ENCODE measurements at regions of chr13 and their contacts with region 1.

Region 1: GRCh38 chr13:75219479-75220237 is 262.3 kb downstream of the TBC1D4 start:
- DNase-seq: peak; percentile 89
- H3K4me3 ChIP-seq: peak overlapping the region; percentile 33 to 54; a peak in 3 of 4 replicates
- H3K27ac ChIP-seq: peak overlapping the region in 1 of 2 experiments; percentile 81; a peak in 2 of 4 replicates
- H3K4me1 ChIP-seq: peaks cover 0 to 18% of the 10 kb centered on the region in 2 experiments; a peak in 2 of 4 replicates
- H3K27me3 ChIP-seq: no peaks in the 10 kb centered on the region
- CTCF ChIP-seq: peak; percentile 98
- EP300 ChIP-seq: no peak; a peak in 1 of 4 replicates
- RAD21 ChIP-seq: peak; percentile 94

Region 2: GRCh38 chr13:73722120-73722519 is 1497.5 kb before region 1 on chr13:
- CTCF ChIA-PET with region 1: interaction called, 10 read pairs
- POLR2A ChIA-PET with region 1: no interaction called
- DNase-seq: peak; percentile 29
- H3K4me3 ChIP-seq: no peak overlapping the region
- H3K27ac ChIP-seq: no peak overlapping the region
- H3K4me1 ChIP-seq: peaks cover 8 to 10% of the 10 kb centered on the region in 2 experiments; a peak in 3 of 4 replicates
- H3K27me3 ChIP-seq: no peaks in the 10 kb centered on the region
- CTCF ChIP-seq: peak; percentile 59
- EP300 ChIP-seq: 0 out of 4 replicates have a peak, but pooled peaks of 1 of the 2 experiments have one; percentile 16
- RAD21 ChIP-seq: peak; percentile 67

Region 3: DNA sequence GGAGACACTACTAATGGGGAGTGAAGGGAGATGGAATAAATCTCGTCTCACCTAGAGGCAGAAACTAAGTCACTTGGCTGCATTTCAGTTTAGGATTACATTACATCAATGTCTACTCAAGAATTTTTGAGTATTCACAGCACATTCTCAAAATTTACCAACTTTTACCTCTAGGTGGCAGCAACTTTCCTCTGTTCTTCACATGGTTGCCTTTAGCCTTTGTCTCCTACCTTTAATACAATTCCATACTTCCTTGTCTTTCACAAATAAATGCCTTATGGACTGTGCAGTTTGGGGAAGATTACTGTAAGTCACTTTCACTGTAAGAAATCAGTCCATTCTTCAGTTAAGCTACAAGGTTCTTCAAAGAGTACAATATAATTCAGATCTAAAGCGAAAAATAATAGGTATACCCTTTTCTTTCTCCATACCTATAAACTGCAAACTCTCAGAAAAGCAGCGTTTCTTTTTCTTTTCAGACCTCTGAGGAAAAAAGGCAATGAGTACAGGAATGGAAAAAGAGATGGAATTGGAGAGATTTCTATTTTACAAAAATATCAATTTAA is 1464.8 kb before region 1 on chr13:
- CTCF ChIA-PET with region 1: interaction called, 21 read pairs
- POLR2A ChIA-PET with region 1: interaction called, 4 read pairs
- DNase-seq: peak; percentile 30
- H3K4me3 ChIP-seq: no peak overlapping the region; a peak in 1 of 4 replicates
- H3K27ac ChIP-seq: peak overlapping the region in 1 of 2 experiments; percentile 14; a peak in 1 of 4 replicates
- H3K4me1 ChIP-seq: peaks cover 4 to 20% of the 10 kb centered on the region in 2 experiments; a peak in 3 of 4 replicates
- H3K27me3 ChIP-seq: no peaks in the 10 kb centered on the region
- CTCF ChIP-seq: peak; percentile 75
- EP300 ChIP-seq: no peak
- RAD21 ChIP-seq: peak; percentile 91

Region 4: GRCh38 chr13:73835138-73835721 is 1384.4 kb before region 1 on chr13:
- CTCF ChIA-PET with region 1: interaction called, 11 read pairs
- POLR2A ChIA-PET with region 1: no interaction called
- DNase-seq: peak; percentile 33
- H3K4me3 ChIP-seq: no peak overlapping the region
- H3K27ac ChIP-seq: peak overlapping the region in 1 of 2 experiments; percentile 69; a peak in 2 of 4 replicates
- H3K4me1 ChIP-seq: peaks cover 8 to 9% of the 10 kb centered on the region in 2 experiments; a peak in 3 of 4 replicates
- H3K27me3 ChIP-seq: no peaks in the 10 kb centered on the region
- CTCF ChIP-seq: peak; percentile 76
- EP300 ChIP-seq: no peak
- RAD21 ChIP-seq: peak; percentile 85

Region 5: DNA sequence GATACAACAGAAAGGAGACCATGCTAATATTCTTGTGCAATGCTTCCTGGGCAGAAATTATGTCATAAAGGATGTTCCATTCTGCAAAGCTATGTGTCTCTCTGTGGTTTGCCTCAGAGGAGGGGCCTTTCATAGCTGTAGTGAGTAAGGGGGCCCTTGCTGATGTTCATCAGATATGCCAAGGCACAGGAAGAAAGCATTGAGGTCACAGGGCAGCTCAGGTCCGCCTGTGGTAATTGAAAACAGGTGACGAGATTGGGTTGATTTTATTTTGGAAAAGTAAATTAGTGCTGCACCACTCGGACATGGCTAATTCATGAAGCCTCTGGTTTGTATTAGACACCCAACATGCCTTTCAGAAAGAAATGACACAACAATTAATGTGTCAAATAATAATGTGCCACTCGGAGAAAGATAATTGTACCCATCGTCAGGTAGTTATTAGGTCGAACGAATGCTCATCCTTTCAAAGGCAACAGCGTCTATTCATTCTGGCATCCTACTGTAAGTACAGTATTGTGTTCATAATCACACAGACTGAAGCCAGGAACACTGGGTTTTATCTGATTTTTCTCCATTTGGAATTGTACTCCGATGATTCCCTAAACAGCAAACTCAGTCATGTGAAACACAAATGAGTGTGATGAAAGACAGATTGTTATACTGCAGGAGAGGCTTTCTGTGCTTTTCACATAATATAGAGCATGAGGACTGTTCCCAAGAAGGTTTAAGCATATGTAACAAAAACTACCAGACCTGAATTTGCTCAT is 663.8 kb before region 1 on chr13:
- CTCF ChIA-PET with region 1: interaction called, 10 read pairs
- POLR2A ChIA-PET with region 1: no interaction called
- DNase-seq: peak; percentile 74
- H3K4me3 ChIP-seq: no peak overlapping the region; a peak in 2 of 4 replicates
- H3K27ac ChIP-seq: peak overlapping the region; percentile 16 to 100; a peak in 3 of 4 replicates
- H3K4me1 ChIP-seq: peaks cover 0 to 30% of the 10 kb centered on the region in 2 experiments; a peak in 2 of 4 replicates
- H3K27me3 ChIP-seq: no peaks in the 10 kb centered on the region
- CTCF ChIP-seq: no peak
- EP300 ChIP-seq: peak; percentile 8 to 82; a peak in 2 of 4 replicates
- RAD21 ChIP-seq: peak; percentile 54

Region 6: DNA sequence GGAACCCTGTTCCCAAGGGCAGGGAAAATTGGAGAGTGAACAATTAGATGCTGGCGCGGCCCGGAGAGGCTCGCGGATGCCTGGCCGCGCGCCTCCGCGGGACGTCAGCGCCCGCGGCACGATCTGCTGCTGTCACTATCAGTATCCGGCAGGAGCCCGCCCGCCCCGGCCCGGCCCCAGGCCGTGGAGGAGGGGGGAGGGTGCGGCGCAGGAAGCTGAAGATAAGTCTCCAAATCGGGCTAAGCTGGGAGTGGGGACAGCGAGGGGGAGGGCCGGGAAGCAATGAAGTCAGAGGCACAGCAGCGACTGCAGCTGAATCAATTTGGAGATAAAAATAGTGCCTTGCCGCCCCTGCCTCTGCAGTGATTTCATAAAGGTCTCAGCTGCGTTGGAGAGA is 643.9 kb before region 1 on chr13:
- CTCF ChIA-PET with region 1: interaction called, 13 read pairs
- POLR2A ChIA-PET with region 1: no interaction called
- DNase-seq: peak; percentile 90
- H3K4me3 ChIP-seq: peak overlapping the region; percentile 36 to 64
- H3K27ac ChIP-seq: peak overlapping the region in 1 of 2 experiments; percentile 99; a peak in 2 of 4 replicates
- H3K4me1 ChIP-seq: peaks cover 0 to 15% of the 10 kb centered on the region in 2 experiments; a peak in 2 of 4 replicates
- H3K27me3 ChIP-seq: no peaks in the 10 kb centered on the region; the same call in 1 of the 2 replicates
- CTCF ChIP-seq: no peak
- EP300 ChIP-seq: peak in 1 of 2 experiments; percentile 90; a peak in 2 of 4 replicates
- RAD21 ChIP-seq: peak; percentile 32

Region 7: DNA sequence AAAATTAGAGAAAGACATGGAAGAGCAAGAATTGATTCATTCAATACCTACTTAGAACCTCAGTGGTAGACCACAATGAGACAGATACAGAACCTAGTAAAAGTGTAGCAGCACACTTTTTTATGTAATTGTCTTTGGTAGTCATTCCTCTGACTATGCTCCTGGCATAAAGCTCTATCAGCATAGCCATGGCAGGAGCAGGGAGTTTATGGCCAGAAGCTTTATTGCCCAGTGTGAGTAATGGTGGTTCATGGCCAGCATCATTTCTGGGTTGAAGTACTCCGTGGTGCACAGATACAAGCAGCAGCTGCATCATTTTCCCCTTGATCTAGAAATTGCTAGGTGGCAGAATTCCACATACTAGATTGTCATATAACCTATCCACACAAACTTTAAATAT is 90.3 kb before region 1 on chr13:
- CTCF ChIA-PET with region 1: no interaction called
- POLR2A ChIA-PET with region 1: no interaction called
- DNase-seq: no peak
- H3K4me3 ChIP-seq: no peak overlapping the region
- H3K27ac ChIP-seq: no peak overlapping the region
- H3K4me1 ChIP-seq: no peaks in the 10 kb centered on the region
- H3K27me3 ChIP-seq: no peaks in the 10 kb centered on the region
- CTCF ChIP-seq: no peak
- EP300 ChIP-seq: no peak
- RAD21 ChIP-seq: no peak

Region 8: GRCh38 chr13:75258159-75258782 is 38.6 kb after region 1 on chr13:
- CTCF ChIA-PET with region 1: interaction called, 13 read pairs
- POLR2A ChIA-PET with region 1: no interaction called
- DNase-seq: peak; percentile 36
- H3K4me3 ChIP-seq: no peak overlapping the region
- H3K27ac ChIP-seq: no peak overlapping the region
- H3K4me1 ChIP-seq: no peaks in the 10 kb centered on the region; a peak in 1 of 4 replicates
- H3K27me3 ChIP-seq: peaks cover 5% of the 10 kb centered on the region; the same call in 1 of the 2 replicates
- CTCF ChIP-seq: peak; percentile 86
- EP300 ChIP-seq: no peak
- RAD21 ChIP-seq: peak; percentile 92

Region 9: DNA sequence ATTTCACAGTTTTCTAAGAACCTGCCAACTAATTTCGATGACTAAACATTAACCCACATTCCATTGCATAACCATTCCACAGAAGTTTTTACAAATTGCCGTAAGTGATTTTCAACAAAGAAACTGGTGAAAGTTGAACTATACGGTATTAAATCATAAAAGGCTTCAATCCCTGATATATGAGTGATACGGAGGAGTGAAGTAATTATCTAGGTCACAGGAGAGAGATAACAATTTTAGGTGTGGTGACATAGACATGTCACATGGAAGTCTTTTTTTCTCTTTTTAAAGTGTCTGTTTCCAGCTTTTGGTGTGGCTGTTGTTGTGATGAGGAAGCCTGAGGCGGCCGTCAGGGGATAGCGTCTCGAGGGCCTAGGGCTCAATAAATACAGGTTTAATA is 232.9 kb after region 1 on chr13:
- CTCF ChIA-PET with region 1: no interaction called
- POLR2A ChIA-PET with region 1: no interaction called
- DNase-seq: no peak
- H3K4me3 ChIP-seq: no peak overlapping the region
- H3K27ac ChIP-seq: no peak overlapping the region
- H3K4me1 ChIP-seq: peaks cover 3 to 7% of the 10 kb centered on the region in 2 experiments; a peak in 3 of 4 replicates
- H3K27me3 ChIP-seq: no peaks in the 10 kb centered on the region
- CTCF ChIP-seq: no peak
- EP300 ChIP-seq: no peak
- RAD21 ChIP-seq: no peak